Prostate gland (tissue), 2 donors: ENCODE measurements at regions of chr6 and their contacts with region 1.

Region 1: GRCh38 chr6:87701676-87702588 is at the start of gene AKIRIN2:
- DNase-seq: peak; percentile 97
- H3K4me3 ChIP-seq: peak within 1 kb of the TSS; percentile 95 to 99
- H3K27ac ChIP-seq: peak within 1 kb of the TSS; percentile 95
- H3K4me1 ChIP-seq: no peaks in the 10 kb centered on the region
- H3K27me3 ChIP-seq: no peaks in the 10 kb centered on the region
- CTCF ChIP-seq: peak in 1 of 4 experiments; percentile 11
- POLR2A ChIP-seq: peak; percentile 98
- total RNA-seq, gene AKIRIN2: 28.4 to 44.1 TPM

Region 2: DNA sequence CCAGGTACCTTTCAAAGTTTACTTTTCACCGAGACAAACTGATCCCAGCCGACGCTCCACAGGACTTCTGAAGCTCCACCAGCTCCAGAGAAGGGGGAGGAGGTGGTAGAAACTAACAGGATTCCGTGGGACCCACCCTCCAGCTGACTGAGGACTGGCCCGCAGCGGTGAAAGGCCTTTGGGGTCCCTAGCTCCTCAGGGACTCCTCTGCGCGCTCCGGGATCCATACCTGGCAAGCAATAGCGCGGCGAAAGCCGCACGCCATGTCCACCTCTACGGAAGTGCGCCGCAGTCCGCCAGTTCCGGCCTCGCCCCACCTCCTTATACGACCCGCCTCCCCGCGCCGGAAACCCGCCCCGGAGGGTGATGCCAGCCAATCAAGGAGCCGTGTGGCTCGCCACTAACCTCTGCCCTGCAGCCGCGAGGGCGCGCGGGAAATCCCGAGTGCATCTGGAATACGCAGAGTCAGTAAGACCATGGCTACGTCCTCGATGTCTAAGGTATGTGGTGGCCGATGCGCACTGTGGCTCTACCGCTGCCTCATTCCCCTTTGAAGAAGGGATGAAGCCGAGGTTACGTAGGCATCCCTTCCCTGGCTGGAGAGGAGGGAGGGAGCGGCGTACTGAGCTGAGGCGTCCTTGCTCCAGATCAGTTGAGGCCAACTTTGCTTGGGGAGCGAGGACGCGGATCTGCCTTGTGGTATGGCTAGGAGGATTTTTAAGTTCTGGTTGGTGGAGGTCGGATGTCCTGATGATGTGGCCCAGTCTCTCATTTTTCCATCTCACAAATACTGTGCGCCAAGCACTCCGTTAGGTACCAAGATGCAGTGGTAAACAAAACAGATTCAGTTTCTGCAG is 112.0 kb before region 1 on chr6 and contains the starts of genes ORC3 and RARS2:
- intact Hi-C with region 1: loop called (anchors 5 kb)
- DNase-seq: peak; percentile 96
- H3K4me3 ChIP-seq: peak within 1 kb of the TSS; percentile 77 to 89
- H3K27ac ChIP-seq: peak within 1 kb of the TSS; percentile 71 to 88
- H3K4me1 ChIP-seq: peaks cover 17% of the 10 kb centered on the region
- H3K27me3 ChIP-seq: no peaks in the 10 kb centered on the region
- CTCF ChIP-seq: no peak
- POLR2A ChIP-seq: peak; percentile 78
- total RNA-seq, gene ORC3: 18.5 to 30.9 TPM
- total RNA-seq, gene RARS2: 27.4 to 29.5 TPM

Region 3: DNA sequence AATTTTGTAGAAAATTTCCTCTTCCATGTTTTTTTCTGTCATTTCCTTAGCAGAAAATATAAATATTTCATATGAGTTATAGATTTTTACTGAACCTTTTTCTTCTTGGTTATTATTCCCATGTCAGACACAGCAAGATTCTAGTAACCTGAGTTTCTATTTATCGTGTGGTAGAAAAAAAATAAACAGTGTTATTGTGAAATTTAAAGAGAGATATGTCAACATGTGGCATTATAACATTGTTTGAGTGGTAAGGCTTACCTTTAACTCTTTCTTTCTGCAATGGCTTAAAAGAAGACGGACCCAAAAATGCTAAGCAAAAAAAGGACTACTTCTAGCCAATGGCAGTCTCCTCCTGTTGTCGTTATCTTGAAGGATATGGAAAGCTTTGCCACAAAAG is 93.1 kb before region 1 on chr6:
- intact Hi-C with region 1: no loop called
- DNase-seq: no peak
- H3K4me3 ChIP-seq: no peak overlapping the region
- H3K27ac ChIP-seq: no peak overlapping the region
- H3K4me1 ChIP-seq: no peaks in the 10 kb centered on the region
- H3K27me3 ChIP-seq: no peaks in the 10 kb centered on the region
- CTCF ChIP-seq: no peak
- POLR2A ChIP-seq: no peak

Region 4: GRCh38 chr6:87851674-87852299 is 149.9 kb after region 1 on chr6:
- intact Hi-C with region 1: no loop called
- DNase-seq: no peak
- H3K4me3 ChIP-seq: no peak overlapping the region
- H3K27ac ChIP-seq: no peak overlapping the region
- H3K4me1 ChIP-seq: no peaks in the 10 kb centered on the region
- H3K27me3 ChIP-seq: no peaks in the 10 kb centered on the region
- CTCF ChIP-seq: no peak
- POLR2A ChIP-seq: no peak